ENCODE measurements at regions of chr4 and their contacts with region 1.

Region 1: DNA sequence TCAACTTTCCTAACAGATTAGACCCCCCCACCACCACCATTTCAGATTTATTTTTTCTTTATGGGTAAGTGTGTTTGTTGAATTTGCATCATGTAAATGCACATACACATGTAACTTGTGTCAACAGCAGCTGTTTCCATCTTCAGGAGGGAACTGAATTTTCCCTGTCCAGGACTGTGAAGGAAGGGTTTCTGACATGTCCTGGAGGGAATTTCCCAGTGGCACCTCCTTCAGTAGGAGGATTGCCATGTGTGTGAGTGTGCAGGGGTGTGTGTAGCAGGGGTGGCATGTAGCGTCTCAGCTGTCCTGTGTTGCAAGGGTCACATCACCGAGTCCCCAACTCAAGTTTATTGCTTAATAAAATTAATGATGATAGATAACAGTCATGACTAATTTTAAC is 19.7 kb downstream of the HERC6 start:
- DNase-seq: no peak
- ATAC-seq: no peak
- H3K4me3 Mint-ChIP-seq: no peak overlapping the region
- H3K27ac Mint-ChIP-seq: no peak overlapping the region
- H3K4me1 Mint-ChIP-seq: peaks cover 5% of the 10 kb centered on the region
- H3K27me3 Mint-ChIP-seq: no peaks in the 10 kb centered on the region
- CTCF ChIP-seq: no peak

Region 2: GRCh38 chr4:88442703-88443191 is 44.4 kb after region 1 on chr4:
- CTCF ChIA-PET with region 1: no interaction called
- POLR2A ChIA-PET with region 1: no interaction called
- intact Hi-C with region 1: loop called (anchors 5 kb)
- DNase-seq: no peak
- ATAC-seq: no peak
- H3K4me3 Mint-ChIP-seq: no peak overlapping the region
- H3K27ac Mint-ChIP-seq: no peak overlapping the region
- H3K4me1 Mint-ChIP-seq: no peaks in the 10 kb centered on the region
- H3K27me3 Mint-ChIP-seq: no peaks in the 10 kb centered on the region
- CTCF ChIP-seq: no peak